Activated B cell treated with CpG ODN at 0.5 μM for 24 hours (primary cell): ENCODE measurements at regions of chr17 and their contacts with region 1.

Region 1: GRCh38 chr17:36629252-36629847 is 28.0 kb downstream of the MRM1 start:
- DNase-seq: peak; percentile 75
- ATAC-seq: peak; percentile 83
- H3K4me3 Mint-ChIP-seq: no peak overlapping the region
- H3K27ac Mint-ChIP-seq: no peak overlapping the region
- H3K4me1 Mint-ChIP-seq: no peaks in the 10 kb centered on the region
- H3K27me3 Mint-ChIP-seq: peaks cover 13% of the 10 kb centered on the region
- CTCF ChIP-seq: peak; percentile 66

Region 2: DNA sequence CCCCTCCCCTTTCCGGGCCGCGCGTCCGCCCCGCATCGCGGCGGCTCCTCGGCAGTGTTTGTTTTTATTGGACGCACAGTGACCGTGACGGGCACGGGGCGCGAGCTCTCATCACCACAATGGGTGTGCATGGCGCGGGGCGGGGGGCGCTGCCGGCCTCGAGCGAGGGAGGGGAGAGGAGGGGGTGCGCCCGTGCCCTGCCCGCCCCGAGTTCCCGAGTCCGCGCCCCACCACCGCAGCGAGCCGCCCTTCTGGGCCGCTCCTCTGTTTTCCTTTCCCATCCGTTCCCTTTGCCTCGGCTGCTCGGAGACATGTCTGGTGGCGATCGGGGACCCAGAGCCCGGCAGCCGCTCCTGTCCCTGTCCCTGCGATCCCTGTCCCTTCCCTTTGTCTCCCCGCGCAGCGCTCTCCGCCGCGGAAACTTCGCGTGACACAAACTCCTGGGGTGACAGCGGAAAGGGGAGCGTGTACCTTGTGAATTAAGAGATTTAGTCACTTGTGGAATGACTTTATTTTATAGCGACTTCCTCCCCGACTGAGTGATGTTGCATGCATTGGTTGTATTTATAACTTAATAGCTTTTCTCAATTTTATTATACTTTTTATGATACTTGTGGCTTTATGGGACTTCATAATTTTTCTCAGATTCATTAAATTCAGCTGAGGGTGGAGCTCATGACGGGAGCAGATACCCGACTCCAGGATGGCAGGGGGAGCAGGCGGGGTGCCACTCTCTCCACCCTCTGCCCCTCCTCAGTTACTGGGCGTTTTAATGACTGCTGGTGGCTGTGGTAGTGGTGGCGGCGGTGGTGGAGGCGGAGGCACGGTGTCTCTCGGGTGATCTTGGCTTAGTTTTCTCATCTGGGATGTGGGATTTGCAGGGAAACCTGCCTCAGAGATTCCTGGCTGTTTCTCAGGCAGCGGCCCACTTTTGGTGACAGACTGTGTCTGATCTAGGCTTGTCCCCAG is 12.8 kb after region 1 on chr17:
- CTCF ChIA-PET with region 1: no interaction called
- POLR2A ChIA-PET with region 1: no interaction called
- intact Hi-C with region 1: no loop called
- DNase-seq: no peak
- ATAC-seq: no peak
- H3K4me3 Mint-ChIP-seq: peak overlapping the region; percentile 41
- H3K27ac Mint-ChIP-seq: no peak overlapping the region
- H3K4me1 Mint-ChIP-seq: peaks cover 11% of the 10 kb centered on the region
- H3K27me3 Mint-ChIP-seq: peaks cover 59% of the 10 kb centered on the region
- CTCF ChIP-seq: no peak

Region 3: DNA sequence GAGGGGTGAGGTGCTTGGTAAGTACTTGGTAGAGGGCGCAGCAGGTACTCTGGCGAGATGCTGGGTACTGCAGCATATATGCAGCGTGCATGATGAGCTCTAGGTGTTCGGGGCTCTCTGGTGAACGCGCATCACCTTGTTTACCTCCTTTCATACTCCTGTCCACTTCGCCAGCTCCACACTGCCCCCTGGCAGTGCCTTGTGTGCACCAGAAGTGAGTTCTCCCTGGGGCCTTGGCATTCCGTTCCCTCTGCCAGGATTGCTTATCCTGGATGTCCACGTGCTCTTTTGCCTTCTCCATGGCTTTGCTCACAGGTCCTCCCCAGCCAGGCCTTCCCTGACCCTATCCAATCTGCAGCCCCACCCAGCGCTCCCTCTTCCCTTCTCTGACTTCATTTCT is 126.2 kb after region 1 on chr17:
- CTCF ChIA-PET with region 1: interaction called, 3 read pairs
- POLR2A ChIA-PET with region 1: no interaction called
- intact Hi-C with region 1: loop called (anchors 1 kb)
- DNase-seq: no peak
- ATAC-seq: no peak
- H3K4me3 Mint-ChIP-seq: no peak overlapping the region
- H3K27ac Mint-ChIP-seq: no peak overlapping the region
- H3K4me1 Mint-ChIP-seq: no peaks in the 10 kb centered on the region
- H3K27me3 Mint-ChIP-seq: peaks cover 15% of the 10 kb centered on the region
- CTCF ChIP-seq: no peak

Region 4: DNA sequence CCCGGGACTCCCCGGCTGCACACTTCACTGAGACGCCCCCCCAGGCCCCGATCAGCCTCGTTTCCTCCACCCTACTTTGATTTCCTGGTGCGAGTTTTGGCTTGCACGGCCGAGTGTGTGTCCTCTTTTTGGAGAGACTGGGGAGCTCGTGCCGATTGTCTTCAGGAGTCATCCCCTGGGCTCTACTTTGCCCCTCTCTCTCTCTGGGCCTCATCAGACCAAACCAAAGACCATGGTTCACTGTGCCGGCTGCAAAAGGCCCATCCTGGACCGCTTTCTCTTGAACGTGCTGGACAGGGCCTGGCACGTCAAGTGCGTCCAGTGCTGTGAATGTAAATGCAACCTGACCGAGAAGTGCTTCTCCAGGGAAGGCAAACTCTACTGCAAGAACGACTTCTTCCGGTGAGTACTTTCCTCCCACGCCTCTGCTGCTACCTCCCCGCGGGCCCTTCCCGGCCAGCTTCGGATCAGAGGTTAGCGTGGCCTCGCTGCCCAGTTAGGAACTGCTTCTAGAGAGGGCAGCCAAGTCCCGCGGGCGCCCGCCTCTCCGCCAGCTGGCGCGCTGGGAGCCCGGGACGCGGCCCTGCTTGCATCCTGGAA is 308.7 kb after region 1 on chr17:
- CTCF ChIA-PET with region 1: no interaction called
- POLR2A ChIA-PET with region 1: no interaction called
- intact Hi-C with region 1: loop called (anchors 5 kb)
- DNase-seq: peak; percentile 30
- ATAC-seq: no peak
- H3K4me3 Mint-ChIP-seq: peak overlapping the region; percentile 76
- H3K27ac Mint-ChIP-seq: peak overlapping the region; percentile 24
- H3K4me1 Mint-ChIP-seq: peaks cover 58% of the 10 kb centered on the region
- H3K27me3 Mint-ChIP-seq: peaks cover 68% of the 10 kb centered on the region
- CTCF ChIP-seq: no peak

Region 5: DNA sequence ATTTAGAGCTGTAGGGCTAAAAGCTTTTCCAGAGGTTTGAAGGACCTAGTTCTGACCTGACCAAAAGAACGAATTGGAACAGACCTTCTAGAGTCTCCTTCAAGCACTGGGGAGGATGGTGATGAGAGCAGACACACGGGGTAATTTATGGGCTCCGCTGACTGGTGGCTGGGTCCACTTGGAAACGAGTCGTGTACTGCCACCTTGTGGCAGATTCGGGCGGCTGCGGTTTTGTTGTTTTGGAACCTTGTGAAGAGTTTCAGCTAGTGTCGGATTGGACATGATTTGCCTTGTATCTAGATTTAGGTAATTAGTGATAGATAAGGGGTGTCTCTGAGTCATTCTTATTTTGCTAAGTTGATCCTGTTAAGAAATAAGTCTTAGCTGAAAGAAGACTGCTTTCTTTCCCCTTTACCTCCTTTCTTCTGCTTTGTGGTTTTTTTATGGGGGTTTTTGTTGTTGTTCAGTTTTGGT is 418.3 kb after region 1 on chr17:
- CTCF ChIA-PET with region 1: interaction called, 77 read pairs
- POLR2A ChIA-PET with region 1: no interaction called
- intact Hi-C with region 1: loop called (anchors 1 kb)
- DNase-seq: peak; percentile 54
- ATAC-seq: peak; percentile 66
- H3K4me3 Mint-ChIP-seq: no peak overlapping the region
- H3K27ac Mint-ChIP-seq: no peak overlapping the region
- H3K4me1 Mint-ChIP-seq: peaks cover 15% of the 10 kb centered on the region
- H3K27me3 Mint-ChIP-seq: no peaks in the 10 kb centered on the region
- CTCF ChIP-seq: peak; percentile 16

Region 6: GRCh38 chr17:37220607-37220953 is 591.2 kb after region 1 on chr17:
- CTCF ChIA-PET with region 1: no interaction called
- POLR2A ChIA-PET with region 1: no interaction called
- intact Hi-C with region 1: loop called (anchors 5 kb)
- DNase-seq: no peak
- ATAC-seq: no peak
- H3K4me3 Mint-ChIP-seq: no peak overlapping the region
- H3K27ac Mint-ChIP-seq: no peak overlapping the region
- H3K4me1 Mint-ChIP-seq: no peaks in the 10 kb centered on the region
- H3K27me3 Mint-ChIP-seq: no peaks in the 10 kb centered on the region
- CTCF ChIP-seq: no peak

Region 7: GRCh38 chr17:37239690-37240334 is 610.5 kb after region 1 on chr17:
- CTCF ChIA-PET with region 1: interaction called, 8 read pairs
- POLR2A ChIA-PET with region 1: no interaction called
- intact Hi-C with region 1: loop called (anchors 1 kb)
- DNase-seq: no peak
- ATAC-seq: no peak
- H3K4me3 Mint-ChIP-seq: no peak overlapping the region
- H3K27ac Mint-ChIP-seq: no peak overlapping the region
- H3K4me1 Mint-ChIP-seq: no peaks in the 10 kb centered on the region
- H3K27me3 Mint-ChIP-seq: no peaks in the 10 kb centered on the region
- CTCF ChIP-seq: no peak